ENCODE measurements at regions of chr5 and their contacts with region 1.

Region 1: DNA sequence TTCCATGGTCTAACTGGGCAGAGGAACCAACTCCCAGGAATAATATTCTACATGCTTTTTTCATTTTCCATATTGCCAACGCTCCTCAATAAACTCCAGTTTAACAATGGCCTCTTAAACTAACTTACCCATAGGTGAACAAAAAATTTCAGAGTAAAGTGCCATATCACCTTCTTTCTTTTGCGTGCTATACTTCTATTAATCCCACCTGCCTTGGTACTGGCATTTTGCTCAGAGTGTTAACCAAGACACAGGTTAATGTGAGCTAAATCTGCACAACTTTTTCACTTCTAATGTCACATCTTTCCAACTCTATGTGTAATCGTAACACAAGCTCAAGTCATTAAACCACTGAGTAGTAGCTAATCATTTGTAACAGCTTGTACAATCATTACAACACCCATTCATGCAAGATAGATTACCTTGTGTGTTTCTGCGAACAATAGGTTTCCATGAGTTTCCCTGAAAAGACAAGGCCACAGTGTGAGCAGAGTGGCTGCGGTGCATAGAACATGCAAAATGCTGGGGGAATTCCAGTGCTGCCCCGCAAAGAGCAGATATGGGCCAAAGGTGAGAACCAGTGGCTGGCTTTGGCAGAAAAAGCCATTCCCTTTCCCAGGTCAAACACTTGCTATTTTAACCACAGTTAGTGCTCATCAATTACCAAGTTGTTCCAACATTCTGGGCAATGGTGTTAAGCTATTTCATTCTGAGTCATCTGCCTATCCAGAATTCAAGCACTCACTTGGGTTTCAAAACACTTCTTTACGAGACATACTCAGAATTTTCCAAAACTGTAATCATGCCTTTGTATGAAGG is 42.8 kb downstream of the TIMD4 start:
- DNase-seq: peak; percentile 84
- ATAC-seq: peak; percentile 75
- H3K4me3 Mint-ChIP-seq: peak overlapping the region; percentile 58
- H3K27ac Mint-ChIP-seq: peak overlapping the region; percentile 97
- H3K4me1 Mint-ChIP-seq: peaks cover 52% of the 10 kb centered on the region
- H3K27me3 Mint-ChIP-seq: no peaks in the 10 kb centered on the region

Region 2: DNA sequence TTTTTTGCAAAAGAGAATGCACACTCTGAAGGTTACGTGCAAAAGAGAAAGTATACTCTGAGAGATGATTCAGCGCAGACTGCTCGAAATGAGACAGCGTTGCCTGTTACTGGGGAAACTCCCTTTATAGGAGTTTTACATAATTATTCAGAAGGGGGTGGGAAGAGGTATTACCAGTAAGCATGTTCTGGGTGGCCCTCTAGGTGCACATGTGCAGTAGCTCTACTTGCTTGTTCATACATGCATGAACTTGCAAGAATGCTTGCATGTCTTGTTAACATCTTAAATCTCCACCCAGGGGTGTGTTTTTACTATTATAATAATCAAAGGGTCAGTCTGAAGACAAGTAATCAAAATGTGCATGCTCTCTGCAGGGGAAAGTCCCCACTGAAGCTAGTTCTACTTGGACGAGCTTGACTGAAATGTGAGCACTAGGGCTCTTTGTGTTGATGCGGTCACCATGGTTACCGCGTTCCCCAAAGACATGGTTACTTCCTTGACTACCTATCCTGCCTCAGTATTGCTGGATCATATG is 517.8 kb before region 1 on chr5:
- CTCF ChIA-PET with region 1: no interaction called
- POLR2A ChIA-PET with region 1: no interaction called
- intact Hi-C with region 1: loop called in 1 of 2 experiments (anchors 5 kb)
- DNase-seq: peak; percentile 77
- ATAC-seq: peak; percentile 93
- H3K4me3 Mint-ChIP-seq: no peak overlapping the region
- H3K27ac Mint-ChIP-seq: no peak overlapping the region
- H3K4me1 Mint-ChIP-seq: peaks cover 15% of the 10 kb centered on the region
- H3K27me3 Mint-ChIP-seq: peaks cover 7% of the 10 kb centered on the region

Region 3: GRCh38 chr5:156934450-156935211 is 14.4 kb after region 1 on chr5:
- CTCF ChIA-PET with region 1: interaction called, 13 read pairs
- POLR2A ChIA-PET with region 1: interaction called, 6 read pairs
- intact Hi-C with region 1: loop called (anchors 1 kb)
- DNase-seq: peak; percentile 80
- ATAC-seq: peak; percentile 89
- H3K4me3 Mint-ChIP-seq: no peak overlapping the region
- H3K27ac Mint-ChIP-seq: peak overlapping the region; percentile 82
- H3K4me1 Mint-ChIP-seq: peaks cover 42% of the 10 kb centered on the region
- H3K27me3 Mint-ChIP-seq: peaks cover 5% of the 10 kb centered on the region

Region 4: GRCh38 chr5:157100140-157100679 is 180.0 kb after region 1 on chr5:
- CTCF ChIA-PET with region 1: no interaction called
- POLR2A ChIA-PET with region 1: no interaction called
- intact Hi-C with region 1: loop called (anchors 2 kb)
- DNase-seq: peak; percentile 65
- ATAC-seq: peak; percentile 91
- H3K4me3 Mint-ChIP-seq: peak overlapping the region; percentile 28
- H3K27ac Mint-ChIP-seq: peak overlapping the region; percentile 96
- H3K4me1 Mint-ChIP-seq: peaks cover 27% of the 10 kb centered on the region
- H3K27me3 Mint-ChIP-seq: no peaks in the 10 kb centered on the region

Region 5: DNA sequence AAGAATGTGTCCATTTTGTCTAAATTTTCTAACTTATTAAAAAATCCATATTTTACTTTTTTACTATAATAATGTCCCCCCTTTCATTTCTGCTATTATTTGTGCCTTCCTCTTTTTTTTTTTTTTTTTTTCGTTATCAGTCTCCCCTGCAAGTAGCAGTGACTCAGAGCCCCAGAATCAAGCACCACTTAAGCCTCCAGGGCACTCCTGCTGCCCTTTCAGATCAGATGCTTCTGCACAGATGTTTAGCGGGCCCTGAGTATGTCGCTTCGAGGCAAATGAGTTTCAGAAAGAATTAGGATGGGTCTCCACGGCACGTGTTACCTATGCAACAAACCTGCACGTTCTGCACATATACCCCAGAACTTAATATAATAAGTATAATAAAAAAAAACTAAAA is 210.7 kb after region 1 on chr5:
- CTCF ChIA-PET with region 1: interaction called, 10 read pairs
- POLR2A ChIA-PET with region 1: interaction called, 5 read pairs
- intact Hi-C with region 1: loop called (anchors 2 to 5 kb)
- DNase-seq: no peak
- ATAC-seq: no peak
- H3K4me3 Mint-ChIP-seq: no peak overlapping the region
- H3K27ac Mint-ChIP-seq: no peak overlapping the region
- H3K4me1 Mint-ChIP-seq: peaks cover 26% of the 10 kb centered on the region
- H3K27me3 Mint-ChIP-seq: no peaks in the 10 kb centered on the region

Region 6: DNA sequence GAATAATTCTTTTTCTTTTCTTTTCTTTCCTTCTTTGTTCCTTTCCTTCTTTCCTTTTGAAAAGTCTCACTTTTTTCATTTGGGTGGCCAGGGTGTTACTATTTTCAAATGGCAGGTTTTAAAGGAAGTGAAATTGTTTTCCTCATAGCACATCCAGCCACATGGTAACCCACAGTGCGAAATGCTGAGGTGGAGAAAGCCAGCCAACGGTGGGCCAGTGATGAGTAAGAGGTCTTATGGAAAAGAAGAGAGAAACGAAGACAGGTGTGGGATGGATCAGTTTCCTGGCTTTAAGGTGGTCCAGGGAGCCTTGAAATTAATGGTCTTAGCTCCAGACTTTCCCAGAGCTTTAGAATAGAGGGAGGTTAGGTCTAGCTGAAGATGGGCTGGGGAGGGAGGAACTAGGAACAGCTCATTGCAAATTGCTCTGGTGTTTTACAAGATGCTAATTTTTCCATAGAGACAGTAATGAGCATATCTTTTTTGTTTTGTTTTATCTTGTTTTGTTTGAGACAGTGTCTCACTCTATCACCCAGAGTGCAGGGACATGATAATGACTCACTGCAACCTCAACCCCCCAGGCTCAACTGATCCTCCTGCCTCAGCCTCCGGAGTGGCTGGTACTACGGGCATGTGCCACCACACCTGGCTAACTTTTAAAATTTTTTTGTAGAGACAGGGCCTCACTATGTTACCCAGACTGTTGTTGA is 278.2 kb after region 1 on chr5:
- CTCF ChIA-PET with region 1: no interaction called
- POLR2A ChIA-PET with region 1: no interaction called
- intact Hi-C with region 1: loop called in 1 of 2 experiments (anchors 1 kb)
- DNase-seq: peak; percentile 75
- ATAC-seq: peak; percentile 78
- H3K4me3 Mint-ChIP-seq: peak overlapping the region; percentile 66
- H3K27ac Mint-ChIP-seq: peak overlapping the region; percentile 98
- H3K4me1 Mint-ChIP-seq: peaks cover 94% of the 10 kb centered on the region
- H3K27me3 Mint-ChIP-seq: no peaks in the 10 kb centered on the region

Region 7: GRCh38 chr5:157603333-157604190 is 683.3 kb after region 1 on chr5:
- CTCF ChIA-PET with region 1: no interaction called
- POLR2A ChIA-PET with region 1: no interaction called
- intact Hi-C with region 1: loop called in 1 of 2 experiments (anchors 5 kb)
- DNase-seq: peak; percentile 78
- ATAC-seq: peak; percentile 44
- H3K4me3 Mint-ChIP-seq: peak overlapping the region; percentile 49
- H3K27ac Mint-ChIP-seq: peak overlapping the region; percentile 79
- H3K4me1 Mint-ChIP-seq: peaks cover 88% of the 10 kb centered on the region
- H3K27me3 Mint-ChIP-seq: no peaks in the 10 kb centered on the region